ENCODE measurements at regions of chr20 and their contacts with region 1.

Region 1: GRCh38 chr20:50713657-50714101 is 17.7 kb upstream of the PARD6B start:
- DNase-seq: no peak
- ATAC-seq: peak; percentile 70
- H3K4me3 ChIP-seq: no peak overlapping the region
- H3K27ac ChIP-seq: no peak overlapping the region
- H3K4me1 ChIP-seq: peaks cover 44% of the 10 kb centered on the region
- H3K27me3 ChIP-seq: 0 out of 5 replicates have a peak, but pooled peaks cover 0 to 2% of the 10 kb centered on the region in 2 experiments
- CTCF ChIP-seq: peak; percentile 78
- EP300 ChIP-seq: no peak
- POLR2A ChIP-seq: no peak
- RAD21 ChIP-seq: peak; percentile 68

Region 2: GRCh38 chr20:50663095-50663850 is 50.4 kb before region 1 on chr20:
- CTCF ChIA-PET with region 1: interaction called, 5 read pairs
- POLR2A ChIA-PET with region 1: interaction called, 5 read pairs
- in situ Hi-C with region 1: no loop called
- intact Hi-C with region 1: loop called (anchors 1 kb)
- DNase-seq: peak; percentile 84
- ATAC-seq: peak; percentile 74
- H3K4me3 ChIP-seq: peak overlapping the region in 1 of 3 experiments; percentile 55; a peak in 2 of 6 replicates
- H3K27ac ChIP-seq: no peak overlapping the region
- H3K4me1 ChIP-seq: peaks cover 88% of the 10 kb centered on the region
- H3K27me3 ChIP-seq: peaks cover 2 to 14% of the 10 kb centered on the region in 2 experiments; a peak in 1 of 5 replicates
- CTCF ChIP-seq: peak; percentile 83
- EP300 ChIP-seq: no peak
- POLR2A ChIP-seq: no peak
- RAD21 ChIP-seq: peak; percentile 87

Region 3: DNA sequence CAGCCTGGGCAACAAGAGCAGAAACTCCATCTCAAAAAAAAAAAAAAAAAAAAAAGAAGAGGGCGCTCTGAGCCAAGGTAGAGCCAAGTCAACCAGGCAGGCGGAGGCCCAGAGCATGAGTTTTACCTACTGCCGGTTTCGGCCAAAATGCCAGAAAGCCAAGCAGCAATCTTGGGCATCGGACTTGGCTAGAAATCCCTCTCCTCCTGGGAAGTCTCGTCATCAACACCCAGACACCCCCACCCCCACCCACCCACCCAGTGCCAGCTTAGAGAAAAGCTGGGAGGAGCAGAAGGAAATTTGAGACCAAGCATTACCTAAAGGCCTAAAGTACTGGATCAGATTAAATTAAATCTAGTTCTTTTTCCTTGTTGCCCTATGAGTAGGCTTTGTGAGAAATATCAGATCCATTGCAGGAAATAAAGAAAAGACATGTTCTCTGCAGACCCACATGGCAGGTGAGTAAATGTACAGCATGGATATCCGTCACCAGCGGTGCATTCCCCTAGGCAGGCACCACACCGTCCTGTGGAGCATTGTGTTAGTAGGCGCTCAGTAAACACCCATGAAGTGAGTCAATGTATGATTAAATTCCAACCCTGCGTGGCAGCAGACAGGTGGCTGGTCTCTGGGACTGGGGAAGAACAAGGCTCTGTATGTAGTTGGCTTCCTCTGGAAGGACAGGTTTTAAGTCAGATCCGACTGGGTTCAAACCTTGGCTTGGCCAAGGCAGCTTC is 43.4 kb before region 1 on chr20:
- CTCF ChIA-PET with region 1: no interaction called
- POLR2A ChIA-PET with region 1: no interaction called
- in situ Hi-C with region 1: no loop called
- intact Hi-C with region 1: loop called (anchors 2 kb)
- DNase-seq: peak; percentile 89
- ATAC-seq: peak; percentile 82
- H3K4me3 ChIP-seq: no peak overlapping the region
- H3K27ac ChIP-seq: no peak overlapping the region
- H3K4me1 ChIP-seq: peaks cover 80% of the 10 kb centered on the region
- H3K27me3 ChIP-seq: peaks cover 2 to 14% of the 10 kb centered on the region in 2 experiments; a peak in 1 of 5 replicates
- CTCF ChIP-seq: no peak
- EP300 ChIP-seq: no peak
- POLR2A ChIP-seq: no peak
- RAD21 ChIP-seq: no peak

Measured in HepG2 (cell line).